Caco-2 (cell line): ENCODE measurements at regions of chr9 and their contacts with region 1.

Region 1: DNA sequence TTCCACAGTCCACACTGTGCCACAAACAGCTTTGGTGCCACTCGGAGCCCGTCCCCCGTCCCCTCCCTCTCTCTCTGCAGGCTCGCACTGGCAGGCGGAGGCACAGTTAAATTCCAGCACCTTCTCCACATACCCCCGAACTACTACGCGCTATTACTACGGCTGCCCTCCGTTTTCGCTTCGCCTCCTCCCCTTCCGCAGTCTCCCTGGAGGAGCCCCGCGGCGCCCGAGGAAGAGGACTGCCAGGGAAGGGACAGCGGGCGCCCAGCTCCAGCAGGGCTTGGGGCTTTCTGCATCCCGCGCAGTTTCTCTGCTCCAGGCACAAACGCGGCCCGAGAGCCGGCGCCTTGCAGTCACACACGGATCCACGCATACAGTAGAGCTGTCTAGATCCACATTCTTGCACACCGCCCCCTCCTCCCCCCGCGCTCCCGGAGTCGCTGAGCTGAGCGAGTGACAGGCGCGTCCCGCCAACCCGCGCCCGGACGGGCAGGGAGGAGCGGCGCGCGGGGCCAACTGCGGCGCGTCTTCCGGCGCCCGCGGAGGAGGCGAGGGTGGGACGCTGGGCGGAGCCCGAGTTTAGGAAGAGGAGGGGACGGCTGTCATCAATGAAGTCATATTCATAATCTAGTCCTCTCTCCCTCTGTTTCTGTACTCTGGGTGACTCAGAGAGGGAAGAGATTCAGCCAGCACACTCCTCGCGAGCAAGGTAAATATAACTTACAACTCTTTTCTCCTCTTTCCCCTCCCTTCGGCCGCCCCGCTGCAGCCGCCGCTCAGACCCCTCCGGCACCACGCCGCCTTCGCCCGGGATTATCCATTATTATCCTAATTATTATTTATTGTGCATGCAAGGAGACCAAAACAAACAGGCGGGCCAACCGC is at the start of gene SMARCA2:
- DNase-seq: peak; percentile 90 to 91
- H3K4me3 ChIP-seq: peak within 1 kb of the TSS; percentile 53
- H3K4me3 Mint-ChIP-seq: peak within 1 kb of the TSS; percentile 91
- H3K27ac Mint-ChIP-seq: peak within 1 kb of the TSS; percentile 32
- H3K4me1 ChIP-seq: no peaks in the 10 kb centered on the region
- H3K4me1 Mint-ChIP-seq: no peaks in the 10 kb centered on the region
- H3K27me3 ChIP-seq: no peaks in the 10 kb centered on the region
- H3K27me3 Mint-ChIP-seq: peaks cover 12% of the 10 kb centered on the region
- CTCF ChIP-seq: no peak
- total RNA-seq, gene SMARCA2: 7.9 and 13.5 TPM in 2 replicates

Region 2: GRCh38 chr9:2116073-2116472 is 101.1 kb after region 1 on chr9:
- CTCF ChIA-PET with region 1: no interaction called
- POLR2A ChIA-PET with region 1: no interaction called
- intact Hi-C with region 1: loop called (anchors 10 kb)
- DNase-seq: peak in 1 of 2 experiments; percentile 9
- H3K4me3 ChIP-seq: no peak overlapping the region
- H3K4me3 Mint-ChIP-seq: no peak overlapping the region
- H3K27ac Mint-ChIP-seq: no peak overlapping the region
- H3K4me1 ChIP-seq: no peaks in the 10 kb centered on the region
- H3K4me1 Mint-ChIP-seq: no peaks in the 10 kb centered on the region
- H3K27me3 ChIP-seq: no peaks in the 10 kb centered on the region
- H3K27me3 Mint-ChIP-seq: no peaks in the 10 kb centered on the region
- CTCF ChIP-seq: peak in 1 of 2 experiments; percentile 32